Ovary (tissue), 10 donors: ENCODE measurements at regions of chr12 and their contacts with region 1.

Region 1: GRCh38 chr12:108803428-108804105 is 53.8 kb downstream of the SSH1 start:
- DNase-seq: peak; percentile 62 to 89 (median 73)
- H3K4me3 ChIP-seq: no peak overlapping the region
- H3K27ac ChIP-seq: peak overlapping the region; percentile 80 to 85
- H3K4me1 ChIP-seq: peaks cover 14% of the 10 kb centered on the region
- H3K27me3 ChIP-seq: no peaks in the 10 kb centered on the region
- CTCF ChIP-seq: peak; percentile 92 to 97 (median 96)
- EP300 ChIP-seq: no peak
- POLR2A ChIP-seq: peak; percentile 23

Region 2: GRCh38 chr12:108562348-108563135 is 241.0 kb before region 1 on chr12 and contains the start of gene ISCU:
- intact Hi-C with region 1: loop called in 3 of 4 experiments (anchors 2 to 10 kb)
- DNase-seq: peak; percentile 98 to 100 (median 99)
- H3K4me3 ChIP-seq: peak within 1 kb of the TSS; percentile 96
- H3K27ac ChIP-seq: peak within 1 kb of the TSS; percentile 78 to 88
- H3K4me1 ChIP-seq: peaks cover 12% of the 10 kb centered on the region
- H3K27me3 ChIP-seq: no peaks in the 10 kb centered on the region
- CTCF ChIP-seq: no peak
- EP300 ChIP-seq: no peak
- POLR2A ChIP-seq: peak; percentile 92
- total RNA-seq, gene ISCU: 110 to 238 (median 156) TPM

Region 3: GRCh38 chr12:108731105-108731865 is 72.3 kb before region 1 on chr12 and contains the start of gene CORO1C:
- intact Hi-C with region 1: loop called in 2 of 4 experiments (anchors 2 to 5 kb)
- DNase-seq: peak; percentile 95 to 97 (median 97)
- H3K4me3 ChIP-seq: peak within 1 kb of the TSS; percentile 82
- H3K27ac ChIP-seq: peak within 1 kb of the TSS; percentile 91
- H3K4me1 ChIP-seq: no peaks in the 10 kb centered on the region
- H3K27me3 ChIP-seq: no peaks in the 10 kb centered on the region
- CTCF ChIP-seq: peak; percentile 62 to 89 (median 88)
- EP300 ChIP-seq: no peak
- POLR2A ChIP-seq: peak; percentile 88
- total RNA-seq, gene CORO1C: 58.7 to 143 (median 113) TPM

Region 4: GRCh38 chr12:108768591-108769500 is 34.7 kb before region 1 on chr12:
- intact Hi-C with region 1: no loop called
- DNase-seq: no peak
- H3K4me3 ChIP-seq: peak overlapping the region; percentile 28
- H3K27ac ChIP-seq: no peak overlapping the region
- H3K4me1 ChIP-seq: peaks cover 20% of the 10 kb centered on the region
- H3K27me3 ChIP-seq: no peaks in the 10 kb centered on the region
- CTCF ChIP-seq: no peak
- EP300 ChIP-seq: no peak
- POLR2A ChIP-seq: no peak

Region 5: GRCh38 chr12:108856428-108857157 is 53.0 kb after region 1 on chr12:
- intact Hi-C with region 1: loop called in 2 of 4 experiments (anchors 10 kb)
- DNase-seq: peak; percentile 21 to 63 (median 57)
- H3K4me3 ChIP-seq: peak overlapping the region; percentile 82
- H3K27ac ChIP-seq: peak overlapping the region; percentile 67 to 70
- H3K4me1 ChIP-seq: peaks cover 6% of the 10 kb centered on the region
- H3K27me3 ChIP-seq: no peaks in the 10 kb centered on the region
- CTCF ChIP-seq: no peak
- EP300 ChIP-seq: no peak
- POLR2A ChIP-seq: no peak

Region 6: DNA sequence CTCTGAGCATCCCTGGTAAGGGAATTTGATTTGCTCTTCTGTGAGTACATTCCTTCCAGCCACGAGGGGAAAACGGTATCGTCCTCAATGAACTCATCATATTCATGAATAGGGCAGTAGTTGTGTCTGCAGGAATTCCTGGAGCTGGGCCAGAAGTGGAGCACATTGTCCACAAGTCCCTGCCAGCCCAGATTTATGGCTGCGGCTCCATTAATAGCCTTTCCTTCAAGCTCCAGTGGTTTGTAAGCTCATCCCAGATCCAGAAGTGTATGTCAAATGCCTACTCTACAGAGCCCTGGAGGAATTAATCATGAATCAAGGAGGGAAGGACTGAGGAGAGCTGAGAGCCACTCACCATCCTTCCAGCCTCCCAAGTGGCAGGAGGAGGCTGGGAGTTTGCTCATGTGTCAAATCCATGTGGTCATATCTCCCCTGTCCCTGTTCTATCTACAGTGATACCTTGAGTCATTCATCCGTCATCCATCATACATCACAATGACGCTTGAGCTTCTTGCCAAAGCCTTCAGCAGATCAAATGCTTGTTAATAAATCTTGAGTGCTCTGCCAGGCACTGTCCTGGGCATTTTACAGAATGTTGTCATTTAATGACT is 151.8 kb after region 1 on chr12:
- intact Hi-C with region 1: no loop called
- DNase-seq: no peak
- H3K4me3 ChIP-seq: no peak overlapping the region
- H3K27ac ChIP-seq: no peak overlapping the region
- H3K4me1 ChIP-seq: no peaks in the 10 kb centered on the region
- H3K27me3 ChIP-seq: no peaks in the 10 kb centered on the region
- CTCF ChIP-seq: no peak
- EP300 ChIP-seq: no peak
- POLR2A ChIP-seq: no peak